ENCODE measurements at regions of chr3 and their contacts with region 1.

Region 1: GRCh38 chr3:184185461-184186308 is at the start of gene ABCF3:
- DNase-seq: peak; percentile 97 to 100
- H3K4me3 ChIP-seq: peak within 1 kb of the TSS; percentile 78
- H3K27ac ChIP-seq: peak within 1 kb of the TSS; percentile 74
- H3K4me1 ChIP-seq: peaks cover 17% of the 10 kb centered on the region
- H3K27me3 ChIP-seq: no peaks in the 10 kb centered on the region
- CTCF ChIP-seq: no peak
- total RNA-seq, gene ABCF3: 98.8 and 137 TPM in 2 replicates

Region 2: DNA sequence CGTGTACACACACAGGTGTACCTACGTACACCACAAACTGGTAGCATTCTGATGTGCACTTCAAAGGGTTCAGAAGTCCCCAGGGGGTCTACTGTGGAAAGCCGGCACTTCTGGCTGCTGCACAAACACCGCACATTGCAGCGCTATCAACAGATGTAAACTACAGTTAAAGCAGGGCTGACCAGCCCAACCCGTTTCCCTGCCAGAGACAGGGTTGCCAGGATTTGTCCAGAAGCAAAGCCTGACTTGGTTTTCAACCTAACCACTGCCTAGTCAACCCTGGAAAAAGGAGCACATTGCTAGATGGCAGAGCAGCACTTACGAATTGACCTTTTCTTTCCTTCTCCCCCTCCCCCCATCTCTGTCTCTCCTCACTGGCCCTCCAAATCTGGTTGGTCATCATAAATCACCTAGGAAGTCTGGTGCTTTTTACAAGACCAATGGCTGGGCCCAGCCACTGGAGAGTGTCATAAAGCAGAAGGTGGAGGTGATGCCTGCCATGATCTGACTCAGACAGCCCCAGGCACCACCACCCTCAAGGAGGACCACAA is 219.4 kb before region 1 on chr3:
- CTCF ChIA-PET with region 1: no interaction called
- POLR2A ChIA-PET with region 1: no interaction called
- intact Hi-C with region 1: no loop called
- DNase-seq: peak; percentile 83 to 98
- H3K4me3 ChIP-seq: peak overlapping the region; percentile 27
- H3K27ac ChIP-seq: peak overlapping the region; percentile 99
- H3K4me1 ChIP-seq: peaks cover 72% of the 10 kb centered on the region
- H3K27me3 ChIP-seq: no peaks in the 10 kb centered on the region
- CTCF ChIP-seq: no peak

Region 3: DNA sequence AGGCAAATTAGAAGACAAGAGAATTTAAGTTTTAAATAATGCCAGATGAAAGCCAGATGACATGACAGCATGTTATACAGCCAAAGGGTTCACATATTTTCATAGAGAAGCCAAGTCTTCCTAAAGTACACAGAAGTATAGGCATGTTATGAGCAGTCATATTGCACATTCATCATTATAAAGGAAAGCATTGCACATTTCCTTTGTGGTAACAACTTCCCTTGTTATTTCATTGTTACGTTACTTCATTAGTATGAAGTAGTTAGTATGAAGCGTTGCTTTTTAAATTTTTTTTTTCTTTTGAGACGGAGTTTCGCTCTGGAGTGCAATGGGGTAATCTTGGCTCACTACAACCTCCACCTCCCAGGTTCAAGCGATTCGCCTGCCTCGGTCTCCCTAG is 163.4 kb before region 1 on chr3:
- CTCF ChIA-PET with region 1: no interaction called
- POLR2A ChIA-PET with region 1: no interaction called
- intact Hi-C with region 1: no loop called
- DNase-seq: no peak
- H3K4me3 ChIP-seq: no peak overlapping the region
- H3K27ac ChIP-seq: no peak overlapping the region
- H3K4me1 ChIP-seq: no peaks in the 10 kb centered on the region
- H3K27me3 ChIP-seq: no peaks in the 10 kb centered on the region
- CTCF ChIP-seq: no peak

Region 4: GRCh38 chr3:184145111-184145524 is 40.6 kb before region 1 on chr3:
- CTCF ChIA-PET with region 1: interaction called, 3 read pairs
- POLR2A ChIA-PET with region 1: interaction called, 4 read pairs
- intact Hi-C with region 1: loop called (anchors 1 kb)
- DNase-seq: peak; percentile 71 to 74
- H3K4me3 ChIP-seq: no peak overlapping the region
- H3K27ac ChIP-seq: no peak overlapping the region
- H3K4me1 ChIP-seq: no peaks in the 10 kb centered on the region
- H3K27me3 ChIP-seq: no peaks in the 10 kb centered on the region
- CTCF ChIP-seq: peak; percentile 79

Region 5: DNA sequence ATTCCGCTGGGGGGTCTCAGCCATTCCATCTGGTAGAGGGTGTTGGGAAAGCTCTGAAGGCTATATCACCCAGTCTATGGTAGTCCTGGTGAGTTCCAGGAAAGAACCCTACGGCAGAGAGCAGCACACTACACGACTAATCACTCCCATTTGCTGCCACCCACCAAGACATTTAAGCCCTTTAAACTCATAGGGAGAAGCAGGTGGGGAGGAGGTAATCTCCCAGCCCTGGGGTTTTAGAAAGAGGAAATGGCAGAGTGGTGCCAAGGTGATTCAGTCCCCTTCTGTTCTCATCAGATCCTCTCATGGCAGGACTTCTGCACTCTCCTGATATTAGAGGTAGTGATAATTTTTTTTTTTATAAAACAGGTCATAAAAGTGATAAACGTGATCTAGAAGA is 33.1 kb after region 1 on chr3:
- CTCF ChIA-PET with region 1: no interaction called
- POLR2A ChIA-PET with region 1: no interaction called
- intact Hi-C with region 1: no loop called
- DNase-seq: no peak
- H3K4me3 ChIP-seq: no peak overlapping the region
- H3K27ac ChIP-seq: no peak overlapping the region
- H3K4me1 ChIP-seq: no peaks in the 10 kb centered on the region
- H3K27me3 ChIP-seq: 0 out of 2 replicates have a peak, but pooled peaks cover 4% of the 10 kb centered on the region
- CTCF ChIP-seq: no peak

Measured in PC-9 (cell line).